PC-9 (cell line): ENCODE measurements at regions of chr6 and their contacts with region 1.

Region 1: GRCh38 chr6:100176311-100176950 is 182.4 kb upstream of the MCHR2 start:
- DNase-seq: peak; percentile 42 to 70
- H3K4me3 ChIP-seq: 0 out of 2 replicates have a peak overlapping the region, but pooled peaks have one; percentile 8
- H3K27ac ChIP-seq: peak overlapping the region; percentile 74
- H3K4me1 ChIP-seq: peaks cover 24% of the 10 kb centered on the region
- H3K27me3 ChIP-seq: no peaks in the 10 kb centered on the region
- CTCF ChIP-seq: peak; percentile 67

Region 2: DNA sequence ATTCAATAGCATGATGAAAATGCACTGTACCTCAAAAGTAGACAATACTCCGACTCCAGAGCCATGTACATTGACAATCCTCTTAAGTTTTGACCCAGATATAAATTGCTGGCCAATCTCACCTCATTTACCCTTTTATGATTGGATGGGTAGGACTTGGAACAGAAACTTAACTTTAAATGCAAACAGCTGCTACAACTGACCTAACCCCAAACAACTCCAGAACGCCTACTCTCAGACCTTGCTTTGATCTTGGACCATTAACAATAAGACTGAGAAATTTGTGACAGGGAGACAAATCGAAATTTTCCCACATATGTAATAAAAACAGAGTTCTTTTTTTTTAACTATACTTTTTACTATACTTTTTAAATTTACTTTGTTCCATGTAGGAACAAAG is 18.1 kb after region 1 on chr6:
- CTCF ChIA-PET with region 1: no interaction called
- POLR2A ChIA-PET with region 1: no interaction called
- intact Hi-C with region 1: no loop called
- DNase-seq: no peak
- H3K4me3 ChIP-seq: no peak overlapping the region
- H3K27ac ChIP-seq: no peak overlapping the region
- H3K4me1 ChIP-seq: no peaks in the 10 kb centered on the region
- H3K27me3 ChIP-seq: no peaks in the 10 kb centered on the region
- CTCF ChIP-seq: no peak

Region 3: GRCh38 chr6:100228831-100229641 is 52.6 kb after region 1 on chr6:
- CTCF ChIA-PET with region 1: no interaction called
- POLR2A ChIA-PET with region 1: interaction called, 3 read pairs
- intact Hi-C with region 1: loop called (anchors 2 kb)
- DNase-seq: peak; percentile 72 to 77
- H3K4me3 ChIP-seq: peak overlapping the region; percentile 58
- H3K27ac ChIP-seq: peak overlapping the region; percentile 45
- H3K4me1 ChIP-seq: peaks cover 31% of the 10 kb centered on the region
- H3K27me3 ChIP-seq: no peaks in the 10 kb centered on the region
- CTCF ChIP-seq: no peak

Region 4: DNA sequence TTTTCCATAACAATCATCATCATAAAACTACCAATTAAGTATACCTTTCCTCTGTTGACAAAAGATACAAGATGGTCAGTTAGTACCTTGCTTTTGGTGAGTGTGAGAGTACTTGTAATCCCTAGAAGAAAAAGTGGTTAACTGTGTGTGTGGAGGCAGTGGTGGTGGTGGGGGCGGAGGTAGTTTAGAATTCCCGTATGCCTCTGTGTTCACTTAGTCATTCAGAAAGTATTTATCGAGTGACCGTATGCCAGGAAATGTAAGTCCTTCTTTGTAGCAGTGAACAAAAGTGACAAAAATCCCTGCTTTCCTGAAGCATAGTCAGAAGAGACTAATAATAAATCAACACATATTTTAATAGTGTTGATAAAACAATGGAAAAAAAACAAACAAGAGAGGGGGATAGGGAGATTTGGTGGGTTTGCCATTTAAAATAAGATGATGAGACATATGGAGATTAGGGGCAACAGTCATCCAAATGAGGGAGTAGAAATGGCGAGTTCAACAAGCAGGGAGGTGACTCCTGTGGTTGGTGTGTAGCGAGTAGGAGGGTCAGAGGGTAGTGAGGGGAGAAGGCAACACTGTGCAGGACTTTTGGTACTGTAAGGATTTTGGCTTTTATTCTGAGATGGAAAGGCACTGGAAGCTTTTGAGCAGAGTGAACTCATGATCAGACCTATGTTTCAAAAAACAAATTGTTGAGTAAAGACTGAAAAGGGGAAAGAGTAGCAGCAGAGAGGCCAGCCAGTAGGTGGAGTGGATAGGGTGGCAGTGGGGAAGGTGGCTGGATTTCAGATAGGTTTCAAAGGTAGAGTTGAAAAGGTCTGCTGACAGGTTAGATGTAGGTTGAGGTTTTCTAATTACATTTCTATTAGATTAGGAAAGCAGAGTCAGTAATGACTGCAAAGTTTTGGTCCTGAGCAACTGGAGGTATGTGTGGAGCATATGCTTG is 328.6 kb after region 1 on chr6:
- CTCF ChIA-PET with region 1: no interaction called
- POLR2A ChIA-PET with region 1: no interaction called
- intact Hi-C with region 1: loop called (anchors 1 kb)
- DNase-seq: peak in 1 of 2 experiments; percentile 60
- H3K4me3 ChIP-seq: no peak overlapping the region
- H3K27ac ChIP-seq: no peak overlapping the region
- H3K4me1 ChIP-seq: no peaks in the 10 kb centered on the region
- H3K27me3 ChIP-seq: no peaks in the 10 kb centered on the region
- CTCF ChIP-seq: no peak

Region 5: GRCh38 chr6:100657678-100658330 is 481.4 kb after region 1 on chr6:
- CTCF ChIA-PET with region 1: interaction called, 4 read pairs
- POLR2A ChIA-PET with region 1: no interaction called
- intact Hi-C with region 1: loop called (anchors 5 kb)
- DNase-seq: peak in 1 of 2 experiments; percentile 56
- H3K4me3 ChIP-seq: no peak overlapping the region
- H3K27ac ChIP-seq: no peak overlapping the region
- H3K4me1 ChIP-seq: peaks cover 2% of the 10 kb centered on the region
- H3K27me3 ChIP-seq: no peaks in the 10 kb centered on the region
- CTCF ChIP-seq: peak; percentile 83